A549 (cell line): ENCODE measurements at regions of chr17 and their contacts with region 1.

Region 1: GRCh38 chr17:29640413-29640812 is 17.7 kb upstream of the CORO6 start:
- DNase-seq: no peak
- ATAC-seq: no peak
- H3K4me3 ChIP-seq: no peak overlapping the region
- H3K27ac ChIP-seq: peak overlapping the region; percentile 10 to 82; a peak in 3 of 6 replicates
- H3K4me1 ChIP-seq: peaks cover 47% of the 10 kb centered on the region
- CTCF ChIP-seq: no peak
- EP300 ChIP-seq: no peak
- POLR2A ChIP-seq: no peak
- RAD21 ChIP-seq: no peak

Region 2: GRCh38 chr17:29369831-29370735 is 270.3 kb before region 1 on chr17:
- CTCF ChIA-PET with region 1: no interaction called
- POLR2A ChIA-PET with region 1: no interaction called
- DNase-seq: peak; percentile 89 to 93
- ATAC-seq: peak; percentile 97 to 99
- H3K4me3 ChIP-seq: no peak overlapping the region; the same call in 2 of the 3 replicates
- H3K27ac ChIP-seq: peak overlapping the region; percentile 20 to 63; a peak in 4 of 6 replicates
- H3K4me1 ChIP-seq: peaks cover 14% of the 10 kb centered on the region
- CTCF ChIP-seq: peak; percentile 94
- EP300 ChIP-seq: no peak
- POLR2A ChIP-seq: no peak
- RAD21 ChIP-seq: peak; percentile 82 to 89

Region 3: GRCh38 chr17:29469276-29469675 is 171.1 kb before region 1 on chr17:
- CTCF ChIA-PET with region 1: no interaction called
- POLR2A ChIA-PET with region 1: no interaction called
- DNase-seq: no peak
- ATAC-seq: no peak
- H3K4me3 ChIP-seq: no peak overlapping the region
- H3K27ac ChIP-seq: no peak overlapping the region
- H3K4me1 ChIP-seq: no peaks in the 10 kb centered on the region
- CTCF ChIP-seq: no peak
- EP300 ChIP-seq: no peak
- POLR2A ChIP-seq: no peak
- RAD21 ChIP-seq: no peak

Region 4: DNA sequence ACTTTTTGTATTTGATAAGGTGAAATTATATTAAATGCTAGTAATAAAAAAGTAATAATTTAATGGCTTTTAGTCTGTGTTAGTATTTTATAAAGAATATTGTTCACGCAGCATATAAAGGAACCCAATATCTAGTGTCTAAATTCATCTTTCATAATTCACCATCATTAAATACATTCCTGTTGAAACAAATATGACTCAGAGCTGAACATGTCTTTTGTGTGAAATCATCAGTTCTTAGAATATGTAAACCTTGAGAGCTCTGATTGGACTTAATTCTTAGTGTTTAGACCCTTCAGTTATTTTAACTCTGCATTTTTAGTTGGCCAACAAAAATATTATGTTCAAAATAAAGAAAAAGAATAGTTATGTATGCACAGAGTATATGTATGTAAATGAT is 145.4 kb before region 1 on chr17:
- CTCF ChIA-PET with region 1: no interaction called
- POLR2A ChIA-PET with region 1: no interaction called
- DNase-seq: no peak
- ATAC-seq: peak in 1 of 2 experiments; percentile 42; a peak in 2 of 6 replicates
- H3K4me3 ChIP-seq: no peak overlapping the region
- H3K27ac ChIP-seq: no peak overlapping the region
- H3K4me1 ChIP-seq: peaks cover 9% of the 10 kb centered on the region; the same call in 1 of the 3 replicates
- CTCF ChIP-seq: no peak
- EP300 ChIP-seq: no peak
- POLR2A ChIP-seq: no peak
- RAD21 ChIP-seq: no peak

Region 5: GRCh38 chr17:29617125-29617480 is 23.3 kb before region 1 on chr17:
- CTCF ChIA-PET with region 1: interaction called, 31 read pairs
- POLR2A ChIA-PET with region 1: interaction called, 8 read pairs
- DNase-seq: peak; percentile 84 to 88
- ATAC-seq: peak; percentile 19 to 67; a peak in 3 of 6 replicates
- H3K4me3 ChIP-seq: peak overlapping the region; percentile 23; the same call in 1 of the 3 replicates
- H3K27ac ChIP-seq: peak overlapping the region in 1 of 2 experiments; percentile 82; a peak in 4 of 6 replicates
- H3K4me1 ChIP-seq: peaks cover 56% of the 10 kb centered on the region
- CTCF ChIP-seq: peak; percentile 58
- EP300 ChIP-seq: no peak
- POLR2A ChIP-seq: peak; percentile 21; the same call in 1 of the 2 replicates
- RAD21 ChIP-seq: peak in 1 of 2 experiments; percentile 23; a peak in 1 of 5 replicates

Region 6: GRCh38 chr17:29628644-29629043 is 11.8 kb before region 1 on chr17:
- CTCF ChIA-PET with region 1: interaction called, 31 read pairs
- POLR2A ChIA-PET with region 1: interaction called, 3 read pairs
- DNase-seq: no peak
- ATAC-seq: no peak
- H3K4me3 ChIP-seq: no peak overlapping the region
- H3K27ac ChIP-seq: no peak overlapping the region
- H3K4me1 ChIP-seq: no peaks in the 10 kb centered on the region
- CTCF ChIP-seq: no peak
- EP300 ChIP-seq: no peak
- POLR2A ChIP-seq: no peak
- RAD21 ChIP-seq: no peak

Region 7: DNA sequence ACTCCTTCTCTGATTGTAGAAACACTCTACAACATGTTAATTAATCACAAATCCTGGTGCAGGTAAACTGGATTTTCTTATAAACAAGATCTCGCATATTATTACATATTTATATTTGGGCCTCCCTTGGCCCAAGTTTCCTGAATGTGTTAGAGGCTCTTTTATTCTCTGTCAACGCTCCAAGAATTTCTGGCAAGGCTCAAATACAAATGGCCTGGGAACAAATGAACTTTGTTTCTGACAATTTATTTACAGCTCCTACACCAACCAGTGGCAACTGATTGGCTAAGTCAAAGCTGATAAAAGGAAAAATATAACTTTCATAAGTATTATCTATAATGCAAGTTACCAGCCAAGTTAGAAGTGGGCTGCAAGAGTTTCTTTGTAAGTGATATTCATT is 47.2 kb after region 1 on chr17:
- CTCF ChIA-PET with region 1: interaction called, 12 read pairs
- POLR2A ChIA-PET with region 1: no interaction called
- DNase-seq: no peak
- ATAC-seq: no peak
- H3K4me3 ChIP-seq: no peak overlapping the region
- H3K27ac ChIP-seq: no peak overlapping the region
- H3K4me1 ChIP-seq: peaks cover 7% of the 10 kb centered on the region
- CTCF ChIP-seq: no peak
- EP300 ChIP-seq: no peak
- POLR2A ChIP-seq: no peak
- RAD21 ChIP-seq: no peak

Region 8: GRCh38 chr17:29753845-29754439 is 113.5 kb after region 1 on chr17:
- CTCF ChIA-PET with region 1: interaction called, 22 read pairs
- POLR2A ChIA-PET with region 1: interaction called, 4 read pairs
- DNase-seq: no peak
- ATAC-seq: no peak
- H3K4me3 ChIP-seq: no peak overlapping the region
- H3K27ac ChIP-seq: no peak overlapping the region
- H3K4me1 ChIP-seq: peaks cover 6% of the 10 kb centered on the region; the same call in 2 of the 3 replicates
- CTCF ChIP-seq: no peak
- EP300 ChIP-seq: no peak
- POLR2A ChIP-seq: no peak
- RAD21 ChIP-seq: no peak

Region 9: DNA sequence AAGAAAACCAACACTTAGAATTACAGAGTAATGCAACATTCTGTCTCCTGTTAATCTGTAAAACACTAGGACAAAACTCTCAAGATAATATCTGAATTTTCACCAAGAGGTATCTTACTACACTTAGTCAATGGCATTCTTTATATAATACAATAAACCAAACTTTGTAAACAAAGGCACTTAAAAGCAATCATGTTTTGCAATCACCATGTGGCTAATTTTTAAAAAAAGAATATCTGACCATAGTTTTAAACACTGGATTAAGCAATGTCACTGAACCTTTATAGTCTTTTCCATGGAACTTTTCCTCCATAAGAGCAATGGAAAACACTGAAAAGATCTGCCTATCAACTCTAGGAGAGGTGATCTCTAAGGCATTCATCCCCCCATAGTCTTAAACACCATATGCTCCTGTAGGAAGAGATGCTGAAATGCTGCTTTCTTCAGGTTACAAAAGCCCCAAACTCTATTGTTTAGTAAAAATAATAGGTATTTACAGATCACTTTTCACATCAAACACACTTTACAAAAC is 126.4 kb after region 1 on chr17:
- CTCF ChIA-PET with region 1: interaction called, 21 read pairs
- POLR2A ChIA-PET with region 1: interaction called, 16 read pairs
- DNase-seq: no peak
- ATAC-seq: no peak
- H3K4me3 ChIP-seq: no peak overlapping the region
- H3K27ac ChIP-seq: no peak overlapping the region
- H3K4me1 ChIP-seq: peaks cover 7% of the 10 kb centered on the region; the same call in 1 of the 3 replicates
- CTCF ChIP-seq: no peak
- EP300 ChIP-seq: no peak
- POLR2A ChIP-seq: no peak
- RAD21 ChIP-seq: no peak

Region 10: DNA sequence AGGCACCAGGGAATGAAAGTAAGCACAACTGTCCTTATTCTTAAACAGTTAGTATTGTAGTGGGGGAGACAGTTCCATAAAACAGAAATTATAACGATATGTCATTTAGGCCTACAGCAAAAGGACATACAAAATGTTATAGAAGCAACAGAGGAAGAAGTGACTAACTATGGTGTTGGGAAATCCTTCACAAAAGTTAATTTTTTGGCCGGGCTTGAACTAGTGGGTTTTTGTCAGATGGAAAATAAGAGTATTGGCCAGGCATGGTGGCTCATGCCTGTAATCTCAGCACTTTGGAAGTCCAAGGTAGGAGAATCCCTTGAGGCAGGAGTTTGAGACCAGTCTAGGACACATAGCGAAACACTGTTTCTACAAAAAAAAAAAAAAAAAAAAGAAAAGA is 161.8 kb after region 1 on chr17:
- CTCF ChIA-PET with region 1: interaction called, 57 read pairs
- POLR2A ChIA-PET with region 1: interaction called, 3 read pairs
- DNase-seq: no peak
- ATAC-seq: no peak
- H3K4me3 ChIP-seq: no peak overlapping the region
- H3K27ac ChIP-seq: no peak overlapping the region
- H3K4me1 ChIP-seq: no peaks in the 10 kb centered on the region
- CTCF ChIP-seq: no peak
- EP300 ChIP-seq: no peak
- POLR2A ChIP-seq: no peak
- RAD21 ChIP-seq: no peak